OCI-LY7 (cell line): ENCODE measurements at regions of chr21 and their contacts with region 1.

Region 1: GRCh38 chr21:15943009-15943666 is 213.4 kb downstream of the USP25 start:
- DNase-seq: no peak
- H3K4me3 ChIP-seq: no peak overlapping the region
- H3K27ac ChIP-seq: no peak overlapping the region
- H3K4me1 ChIP-seq: no peaks in the 10 kb centered on the region
- CTCF ChIP-seq: no peak

Region 2: DNA sequence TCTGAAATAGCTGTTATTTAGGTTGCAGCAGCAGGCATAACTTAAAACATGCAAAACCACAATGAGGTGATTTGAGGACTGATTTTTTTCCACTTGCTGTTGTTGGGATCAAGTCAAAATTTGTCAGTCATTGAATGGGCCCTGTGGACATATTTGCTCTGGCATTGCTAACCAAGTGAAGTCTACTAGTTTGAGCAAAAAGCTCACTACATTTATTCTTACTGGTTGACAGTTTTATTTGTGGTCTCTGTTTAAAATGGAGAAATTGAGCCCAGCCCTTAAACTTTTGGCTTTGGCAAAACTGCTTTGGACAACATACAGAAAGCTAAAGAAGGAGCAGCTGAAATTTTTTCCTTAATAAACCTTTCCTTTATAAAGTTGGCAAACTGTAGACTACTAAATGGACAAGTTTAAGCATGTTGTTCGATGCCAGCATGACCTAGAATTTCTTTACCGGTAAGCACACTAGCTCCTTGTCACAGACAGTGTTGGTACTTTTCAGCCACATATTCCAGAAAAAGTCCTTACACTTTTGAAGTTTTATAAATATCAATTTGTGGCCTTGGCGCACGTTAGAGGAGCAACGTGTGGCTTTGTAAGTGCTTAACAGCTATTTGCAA is 21.2 kb after region 1 on chr21:
- CTCF ChIA-PET with region 1: no interaction called
- POLR2A ChIA-PET with region 1: no interaction called
- intact Hi-C with region 1: loop called (anchors 2 kb)
- DNase-seq: no peak
- H3K4me3 ChIP-seq: no peak overlapping the region
- H3K27ac ChIP-seq: no peak overlapping the region
- H3K4me1 ChIP-seq: no peaks in the 10 kb centered on the region
- CTCF ChIP-seq: no peak

Region 3: DNA sequence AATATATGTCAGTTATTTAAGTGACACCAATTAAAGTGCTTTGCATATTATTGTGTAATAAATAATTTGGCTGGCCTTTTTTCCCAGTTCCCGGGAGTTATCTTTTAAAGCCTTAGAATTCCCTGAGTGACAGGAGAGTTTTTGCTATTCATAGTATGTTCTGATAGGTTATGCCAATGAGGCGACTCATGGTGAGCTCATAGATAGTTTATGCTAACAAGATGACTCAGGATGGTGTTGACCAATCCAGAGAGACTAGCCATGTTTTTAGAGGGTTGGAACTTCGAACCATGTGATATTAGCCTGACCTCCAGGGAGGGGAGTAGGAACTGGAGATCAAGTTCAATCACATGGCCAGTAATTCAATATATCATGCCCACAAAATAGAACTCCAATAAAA is 97.5 kb after region 1 on chr21:
- CTCF ChIA-PET with region 1: no interaction called
- POLR2A ChIA-PET with region 1: no interaction called
- intact Hi-C with region 1: no loop called
- DNase-seq: no peak
- H3K4me3 ChIP-seq: no peak overlapping the region
- H3K27ac ChIP-seq: no peak overlapping the region
- H3K4me1 ChIP-seq: no peaks in the 10 kb centered on the region
- CTCF ChIP-seq: no peak